Motor neuron (in vitro differentiated cells): ENCODE measurements at regions of chr21 and their contacts with region 1.

Region 1: DNA sequence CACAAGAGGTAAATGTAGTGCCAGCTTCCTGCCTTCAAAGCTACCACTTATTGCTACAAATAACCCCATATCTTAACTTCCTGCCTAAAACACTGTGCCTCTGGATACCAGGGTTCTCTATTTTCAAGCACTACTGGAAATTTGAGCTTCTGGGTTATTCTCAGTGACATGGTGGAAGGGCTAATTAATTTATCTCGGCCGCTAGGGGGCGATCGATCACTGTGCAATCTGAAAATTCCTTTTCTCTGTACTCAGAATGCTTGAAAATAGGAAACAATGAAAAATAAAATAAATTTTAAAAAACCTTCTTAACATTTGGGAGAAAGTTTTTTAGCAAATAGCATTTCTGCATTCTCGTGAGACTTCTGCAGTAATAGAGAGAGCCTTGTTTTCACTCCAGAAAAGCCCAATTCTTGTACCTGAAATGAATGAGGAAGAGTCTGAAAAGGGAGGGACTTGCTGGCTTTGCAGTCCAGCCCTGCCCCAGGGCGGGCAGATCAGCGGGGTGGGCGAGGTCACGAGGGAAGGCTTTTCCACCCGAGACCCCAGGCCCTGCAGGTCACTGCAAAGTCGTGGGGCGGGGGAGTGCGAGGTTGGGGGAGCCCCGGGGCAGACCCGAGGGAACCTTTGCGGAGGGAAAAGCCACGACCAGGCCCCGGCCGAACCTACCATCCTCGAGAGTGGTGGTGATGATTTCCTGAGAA is 276.7 kb downstream of the PCP4 start:
- ATAC-seq: peak; percentile 47 to 83 (median 66)
- H3K4me3 ChIP-seq: no peak overlapping the region
- H3K27ac ChIP-seq: no peak overlapping the region
- H3K4me1 ChIP-seq: peaks cover 4 to 10% of the 10 kb centered on the region in 2 donors

Region 2: GRCh38 chr21:39066829-39067780 is 1076.9 kb before region 1 on chr21:
- in situ Hi-C with region 1: no loop called
- ATAC-seq: no peak
- H3K4me3 ChIP-seq: no peak overlapping the region
- H3K27ac ChIP-seq: no peak overlapping the region
- H3K4me1 ChIP-seq: no peaks in the 10 kb centered on the region

Region 3: GRCh38 chr21:40049394-40050290 is 94.3 kb before region 1 on chr21:
- in situ Hi-C with region 1: no loop called
- ATAC-seq: peak; percentile 46 to 90 (median 80)
- H3K4me3 ChIP-seq: no peak overlapping the region
- H3K27ac ChIP-seq: no peak overlapping the region
- H3K4me1 ChIP-seq: peaks cover 25 to 30% of the 10 kb centered on the region in 2 donors

Region 4: GRCh38 chr21:40433591-40434006 is 289.6 kb after region 1 on chr21:
- in situ Hi-C with region 1: loop called in 1 of 9 experiments (anchors 25 kb)
- ATAC-seq: peak in 2 of 8 experiments; percentile 41 to 66
- H3K4me3 ChIP-seq: no peak overlapping the region
- H3K27ac ChIP-seq: no peak overlapping the region
- H3K4me1 ChIP-seq: no peaks in the 10 kb centered on the region

Region 5: GRCh38 chr21:40563900-40564299 is 419.9 kb after region 1 on chr21:
- in situ Hi-C with region 1: no loop called
- ATAC-seq: peak in 2 of 8 experiments; percentile 60 to 71
- H3K4me3 ChIP-seq: no peak overlapping the region
- H3K27ac ChIP-seq: no peak overlapping the region
- H3K4me1 ChIP-seq: peaks cover 0 to 19% of the 10 kb centered on the region in 2 donors

Region 6: DNA sequence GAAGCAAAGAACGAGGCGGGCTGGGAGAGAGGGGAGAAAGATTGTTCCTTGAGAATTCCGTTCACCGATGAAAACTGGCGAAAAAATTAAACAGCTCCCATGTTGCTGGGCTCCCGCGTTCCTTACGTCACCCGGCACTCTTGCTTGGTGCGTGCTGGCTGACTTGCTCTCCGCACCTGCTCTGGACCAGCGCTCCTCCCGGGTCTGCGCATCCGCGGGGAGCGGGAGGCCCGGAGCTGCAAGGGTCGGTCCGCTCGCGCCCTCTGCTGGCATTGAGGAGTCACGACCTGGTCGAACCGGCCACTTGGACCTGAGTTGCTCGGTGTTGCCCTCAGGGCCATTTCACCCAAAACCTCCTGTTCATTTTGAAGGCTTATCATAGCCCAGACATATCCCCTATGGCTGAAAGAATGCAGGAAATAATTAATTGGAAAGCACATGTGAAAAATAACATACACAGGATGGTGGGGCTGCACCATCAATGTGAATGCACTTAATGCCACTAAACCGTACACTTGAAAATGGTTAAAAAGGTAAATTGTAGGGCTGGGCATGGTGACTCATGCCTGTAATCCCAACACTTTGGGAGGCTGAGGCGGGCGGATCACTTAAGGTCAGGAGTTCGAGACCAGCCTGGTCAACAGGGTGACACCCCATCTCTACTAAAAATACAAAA is 925.1 kb after region 1 on chr21:
- in situ Hi-C with region 1: loop called in 1 of 9 experiments (anchors 25 kb)
- ATAC-seq: peak; percentile 79 to 98 (median 97)
- H3K4me3 ChIP-seq: peak overlapping the region; percentile 0 to 12 (median 7)
- H3K27ac ChIP-seq: peak overlapping the region; percentile 5 to 32
- H3K4me1 ChIP-seq: peaks cover 20 to 22% of the 10 kb centered on the region in 2 donors

Region 7: GRCh38 chr21:41086569-41086968 is 942.6 kb after region 1 on chr21:
- in situ Hi-C with region 1: loop called in 1 of 9 experiments (anchors 25 kb)
- ATAC-seq: peak in 1 of 8 experiments; percentile 63
- H3K4me3 ChIP-seq: no peak overlapping the region
- H3K27ac ChIP-seq: no peak overlapping the region
- H3K4me1 ChIP-seq: no peaks in the 10 kb centered on the region